Endothelial cell of umbilical vein (primary cell): ENCODE measurements at regions of chr6 and their contacts with region 1.

Region 1: DNA sequence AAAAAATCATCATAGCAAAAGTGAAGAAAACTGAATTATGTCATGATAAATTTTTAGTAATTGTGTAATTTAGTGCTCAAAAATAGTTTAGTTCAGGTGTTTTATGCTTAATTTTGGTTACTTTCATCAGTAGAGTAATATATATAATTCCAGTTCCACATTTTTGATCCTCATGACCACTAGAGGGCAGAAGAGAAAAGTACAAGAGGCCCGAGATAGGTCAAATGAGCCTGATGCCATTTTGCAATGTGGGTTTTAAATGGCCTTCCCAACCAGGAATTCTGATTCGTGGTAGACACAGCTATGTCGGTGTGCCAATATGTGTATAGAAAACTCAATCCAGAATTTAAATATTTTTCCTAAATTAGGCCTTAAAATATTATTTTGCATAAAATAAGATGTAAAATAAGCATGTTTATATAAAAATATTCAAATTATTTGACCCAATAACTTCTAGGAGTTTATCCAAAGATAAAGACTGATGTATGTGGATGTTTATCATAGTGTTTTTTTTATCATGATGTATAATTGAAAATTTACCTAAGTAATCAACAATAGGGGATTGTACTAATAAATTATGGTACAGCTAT is 159.7 kb upstream of the RPS6KA2 start:
- DNase-seq: peak; percentile 61
- H3K4me3 ChIP-seq: no peak overlapping the region
- H3K27ac ChIP-seq: no peak overlapping the region
- H3K4me1 ChIP-seq: no peaks in the 10 kb centered on the region
- H3K27me3 ChIP-seq: no peaks in the 10 kb centered on the region
- CTCF ChIP-seq: peak; percentile 49 to 50
- POLR2A ChIP-seq: no peak

Region 2: GRCh38 chr6:166950443-166950821 is 163.6 kb after region 1 on chr6:
- CTCF ChIA-PET with region 1: interaction called, 10 read pairs
- POLR2A ChIA-PET with region 1: no interaction called
- dilution Hi-C with region 1: no loop called
- intact Hi-C with region 1: loop called (anchors 1 kb)
- DNase-seq: no peak
- H3K4me3 ChIP-seq: no peak overlapping the region
- H3K27ac ChIP-seq: no peak overlapping the region
- H3K4me1 ChIP-seq: peaks cover 2% of the 10 kb centered on the region
- H3K27me3 ChIP-seq: no peaks in the 10 kb centered on the region
- CTCF ChIP-seq: no peak
- POLR2A ChIP-seq: no peak

Region 3: DNA sequence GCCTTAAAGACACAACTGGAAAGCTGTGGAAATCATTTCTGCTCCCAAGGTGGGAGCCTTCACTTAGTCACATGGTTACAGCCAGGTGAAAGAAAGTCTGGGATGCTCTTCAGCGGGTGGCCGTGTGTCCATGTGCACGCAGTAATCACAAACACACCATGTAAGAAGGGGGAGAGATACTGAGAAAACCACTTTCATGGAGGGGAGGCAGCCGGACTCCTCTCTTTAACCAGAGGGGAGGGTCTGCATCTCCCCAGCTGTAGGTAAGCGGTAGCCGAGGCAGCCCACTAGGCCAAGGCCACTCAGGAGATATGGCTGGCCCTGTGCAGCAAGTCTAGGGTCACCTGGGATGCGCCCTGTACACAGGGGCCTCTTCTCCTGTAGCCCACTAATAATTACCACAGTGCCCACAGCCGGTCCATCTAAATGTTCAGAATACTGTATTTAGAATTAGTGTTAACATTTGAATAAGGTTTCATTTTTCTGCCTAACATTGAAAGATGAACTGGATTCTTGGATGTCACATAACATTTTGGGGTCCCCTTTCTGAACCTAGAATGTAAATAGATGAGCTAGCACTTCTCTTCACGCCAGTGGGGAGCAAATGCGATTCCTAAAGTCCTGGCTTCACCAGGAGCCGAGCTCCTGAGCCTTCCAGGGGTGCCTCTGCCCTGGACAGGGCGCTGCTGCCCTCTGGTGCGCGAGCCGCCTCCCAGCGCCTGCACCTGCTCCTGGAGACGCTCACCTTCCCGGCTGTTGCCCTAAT is 355.1 kb after region 1 on chr6:
- CTCF ChIA-PET with region 1: interaction called, 8 read pairs
- POLR2A ChIA-PET with region 1: no interaction called
- dilution Hi-C with region 1: no loop called
- intact Hi-C with region 1: loop called (anchors 1 kb)
- DNase-seq: peak; percentile 11
- H3K4me3 ChIP-seq: no peak overlapping the region
- H3K27ac ChIP-seq: no peak overlapping the region
- H3K4me1 ChIP-seq: no peaks in the 10 kb centered on the region
- H3K27me3 ChIP-seq: no peaks in the 10 kb centered on the region
- CTCF ChIP-seq: peak; percentile 33 to 66
- POLR2A ChIP-seq: no peak